Activated CD8-positive, alpha-beta memory T cell treated with anti-CD3 and anti-CD28 coated beads, Interleukin-2, amount 10 ng/mL, durations not matched to agents 7 days and 5 days (primary cell): ENCODE measurements at regions of chr7 and their contacts with region 1.

Region 1: GRCh38 chr7:16431646-16432424 is 10.5 kb upstream of the CRPPA start:
- DNase-seq: peak; percentile 43
- ATAC-seq: peak; percentile 76
- H3K4me3 Mint-ChIP-seq: no peak overlapping the region
- H3K27ac Mint-ChIP-seq: no peak overlapping the region
- H3K4me1 Mint-ChIP-seq: peaks cover 8% of the 10 kb centered on the region
- H3K27me3 Mint-ChIP-seq: no peaks in the 10 kb centered on the region

Region 2: GRCh38 chr7:16193631-16194030 is 238.2 kb before region 1 on chr7:
- CTCF ChIA-PET with region 1: no interaction called
- DNase-seq: no peak
- ATAC-seq: no peak
- H3K4me3 Mint-ChIP-seq: no peak overlapping the region
- H3K27ac Mint-ChIP-seq: no peak overlapping the region
- H3K4me1 Mint-ChIP-seq: no peaks in the 10 kb centered on the region
- H3K27me3 Mint-ChIP-seq: no peaks in the 10 kb centered on the region

Region 3: DNA sequence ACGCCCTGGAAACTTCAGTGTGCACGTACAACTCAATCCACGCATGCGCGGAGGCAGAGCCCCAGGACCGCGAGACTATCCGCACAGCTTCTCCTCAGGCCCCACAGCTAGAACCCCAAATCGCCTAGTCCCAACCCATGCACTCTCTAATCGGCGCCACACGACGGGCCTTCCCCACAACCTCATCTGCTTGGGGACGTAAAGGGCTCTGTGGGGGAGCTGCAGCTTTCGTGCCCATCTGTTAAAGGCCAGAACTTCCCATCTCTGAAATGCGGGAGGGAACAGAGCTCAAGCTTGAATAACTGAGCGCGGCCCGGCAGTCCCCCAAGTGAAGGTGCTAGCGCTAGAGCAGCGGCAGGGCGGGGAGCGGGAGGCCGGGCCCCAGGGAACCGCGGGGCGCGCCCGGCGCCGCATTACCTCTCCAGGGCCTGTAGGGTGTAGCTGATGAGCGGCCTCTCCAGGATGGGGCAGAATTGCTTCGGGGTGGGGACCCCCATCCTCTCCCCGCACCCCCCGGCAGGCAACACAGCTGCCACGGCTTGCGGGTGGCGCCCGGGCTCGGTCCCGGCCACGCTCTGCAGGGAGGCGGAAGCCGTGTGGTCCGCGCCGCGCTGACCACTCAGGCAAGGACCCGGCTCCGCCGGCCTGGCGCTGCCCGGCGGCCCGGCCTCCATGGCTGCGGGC is 11.0 kb before region 1 on chr7:
- CTCF ChIA-PET with region 1: interaction called, 10 read pairs
- DNase-seq: peak; percentile 93
- ATAC-seq: peak; percentile 91
- H3K4me3 Mint-ChIP-seq: peak overlapping the region; percentile 81
- H3K27ac Mint-ChIP-seq: peak overlapping the region; percentile 99
- H3K4me1 Mint-ChIP-seq: peaks cover 28% of the 10 kb centered on the region
- H3K27me3 Mint-ChIP-seq: no peaks in the 10 kb centered on the region

Region 4: DNA sequence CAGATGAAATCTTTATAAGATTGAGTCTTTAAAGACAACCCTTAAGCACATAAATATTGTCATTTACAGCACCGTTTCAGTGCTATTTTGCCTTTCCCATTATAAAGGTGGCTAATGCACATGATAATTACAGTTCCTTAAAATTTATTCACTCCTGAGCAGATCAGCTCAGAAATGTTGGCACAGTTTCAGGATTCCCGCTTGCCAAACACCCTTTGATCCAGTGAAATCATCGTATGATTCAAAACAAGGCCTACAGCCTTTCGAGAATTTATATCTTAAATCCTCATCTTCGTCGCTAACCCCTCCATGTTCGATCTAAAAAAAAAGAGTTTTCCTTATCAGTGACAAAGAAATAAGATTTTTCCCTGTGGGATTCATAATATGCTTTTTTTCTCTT is 47.8 kb after region 1 on chr7:
- CTCF ChIA-PET with region 1: no interaction called
- DNase-seq: no peak
- ATAC-seq: no peak
- H3K4me3 Mint-ChIP-seq: no peak overlapping the region
- H3K27ac Mint-ChIP-seq: no peak overlapping the region
- H3K4me1 Mint-ChIP-seq: no peaks in the 10 kb centered on the region
- H3K27me3 Mint-ChIP-seq: peaks cover 4% of the 10 kb centered on the region